CD8-positive, alpha-beta T cell (primary cell): ENCODE measurements at regions of chr16 and their contacts with region 1.

Region 1: DNA sequence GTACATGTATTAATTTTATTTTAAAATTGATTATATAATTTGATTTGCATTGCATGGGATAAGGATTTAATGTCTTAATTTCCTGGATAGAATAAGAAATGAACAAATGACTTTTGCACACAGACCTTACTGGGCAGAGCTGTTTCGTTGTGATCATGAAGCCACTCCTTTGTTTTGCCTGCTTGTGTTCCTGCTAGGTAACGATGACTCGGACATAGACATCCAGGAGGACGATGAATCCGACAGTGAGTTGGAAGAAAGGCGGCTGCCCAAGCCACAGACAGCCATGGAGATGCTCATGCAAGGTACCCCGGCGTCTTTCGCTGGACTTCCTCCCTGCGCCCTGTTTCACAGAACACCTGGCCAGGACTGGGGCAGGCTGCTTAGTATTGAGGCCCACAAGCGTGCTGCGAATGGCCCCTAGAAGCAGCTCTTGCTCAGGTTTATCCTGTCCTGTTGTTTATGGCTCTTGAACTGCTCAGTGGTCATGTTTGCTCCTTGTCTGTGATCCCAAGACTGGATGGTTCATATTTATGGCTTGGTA is 29.6 kb downstream of the CLUAP1 start:
- DNase-seq: no peak
- ATAC-seq: no peak
- H3K4me3 ChIP-seq: no peak overlapping the region
- H3K4me3 Mint-ChIP-seq: no peak overlapping the region
- H3K27ac ChIP-seq: no peak overlapping the region
- H3K27ac Mint-ChIP-seq: no peak overlapping the region
- H3K4me1 ChIP-seq: no peaks in the 10 kb centered on the region
- H3K4me1 Mint-ChIP-seq: peaks cover 13% of the 10 kb centered on the region
- H3K27me3 ChIP-seq: no peaks in the 10 kb centered on the region
- H3K27me3 Mint-ChIP-seq: no peaks in the 10 kb centered on the region
- CTCF ChIP-seq: no peak

Region 2: GRCh38 chr16:3564130-3564888 is 33.9 kb after region 1 on chr16:
- CTCF ChIA-PET with region 1: no interaction called
- POLR2A ChIA-PET with region 1: no interaction called
- intact Hi-C with region 1: no loop called
- DNase-seq: no peak
- ATAC-seq: no peak
- H3K4me3 ChIP-seq: no peak overlapping the region
- H3K4me3 Mint-ChIP-seq: no peak overlapping the region
- H3K27ac ChIP-seq: no peak overlapping the region
- H3K27ac Mint-ChIP-seq: no peak overlapping the region
- H3K4me1 ChIP-seq: no peaks in the 10 kb centered on the region
- H3K4me1 Mint-ChIP-seq: peaks cover 2% of the 10 kb centered on the region
- H3K27me3 ChIP-seq: no peaks in the 10 kb centered on the region
- H3K27me3 Mint-ChIP-seq: no peaks in the 10 kb centered on the region
- CTCF ChIP-seq: no peak

Region 3: DNA sequence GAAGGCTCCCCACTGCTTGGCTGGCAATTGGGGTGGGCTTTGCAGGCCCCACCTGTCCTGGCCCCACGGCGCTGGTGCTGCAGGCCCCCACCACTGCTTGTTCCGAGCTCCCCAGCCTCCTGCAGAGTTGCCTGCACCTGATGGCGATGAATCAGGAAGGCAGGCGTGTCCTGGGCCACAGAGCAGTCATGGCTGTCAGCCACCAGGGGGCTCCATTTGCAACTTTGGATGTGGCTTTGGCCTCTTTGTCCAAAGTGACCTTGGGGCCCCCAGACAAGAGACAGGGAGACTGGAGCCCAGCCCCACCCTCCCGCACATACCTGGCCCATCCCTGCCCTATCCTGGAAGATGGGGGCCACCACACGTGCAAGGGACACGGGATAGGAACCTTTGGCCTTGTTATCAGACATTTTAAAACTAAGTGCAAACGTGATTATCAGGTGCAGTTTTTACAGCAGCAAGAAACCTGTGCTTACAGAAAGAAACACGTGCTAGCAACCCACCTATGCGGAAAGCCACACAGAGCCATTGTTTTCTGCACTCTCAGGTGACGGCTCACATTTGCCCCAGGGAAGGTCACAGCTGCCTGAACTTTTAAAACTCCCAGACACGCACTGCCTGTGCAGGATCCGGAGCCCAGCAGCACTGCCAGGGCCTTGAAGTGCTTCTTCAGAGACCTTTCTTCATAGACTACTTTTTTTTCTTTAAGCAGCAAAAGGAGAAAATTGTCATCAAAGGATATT is 124.0 kb after region 1 on chr16 and contains the start of gene DNASE1:
- CTCF ChIA-PET with region 1: interaction called, 4 read pairs
- POLR2A ChIA-PET with region 1: no interaction called
- intact Hi-C with region 1: loop called in 1 of 2 experiments (anchors 5 kb)
- DNase-seq: peak; percentile 13 to 73 (median 57)
- ATAC-seq: peak; percentile 81
- H3K4me3 ChIP-seq: no peak within 1 kb of the TSS
- H3K4me3 Mint-ChIP-seq: no peak within 1 kb of the TSS
- H3K27ac ChIP-seq: no peak within 1 kb of the TSS
- H3K27ac Mint-ChIP-seq: peak within 1 kb of the TSS; percentile 32
- H3K4me1 ChIP-seq: no peaks in the 10 kb centered on the region
- H3K4me1 Mint-ChIP-seq: peaks cover 2% of the 10 kb centered on the region
- H3K27me3 ChIP-seq: no peaks in the 10 kb centered on the region
- H3K27me3 Mint-ChIP-seq: no peaks in the 10 kb centered on the region
- CTCF ChIP-seq: peak; percentile 69
- total RNA-seq, gene DNASE1: 7.6 to 7.9 TPM

Region 4: DNA sequence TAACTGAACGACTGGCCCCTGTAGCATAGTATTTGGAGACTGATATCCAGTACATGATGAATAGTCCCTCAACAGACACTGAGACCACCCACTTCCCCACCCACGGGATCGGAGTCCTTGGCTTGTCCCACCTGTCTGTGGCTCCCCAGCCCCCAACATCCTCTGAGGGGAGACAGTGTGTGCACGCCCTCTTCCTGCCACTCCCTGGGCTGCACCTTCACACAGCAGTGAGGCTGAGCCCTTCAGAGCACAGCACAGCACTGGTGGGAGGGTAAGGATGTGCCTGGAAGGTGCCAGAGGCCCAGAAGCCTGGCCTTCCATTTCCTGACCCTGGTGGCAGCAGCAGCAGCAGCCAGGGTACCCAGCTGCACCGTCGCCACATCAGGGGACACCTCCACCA is 135.1 kb after region 1 on chr16:
- CTCF ChIA-PET with region 1: interaction called, 13 read pairs
- POLR2A ChIA-PET with region 1: no interaction called
- intact Hi-C with region 1: loop called in 1 of 2 experiments (anchors 1 kb)
- DNase-seq: peak in 8 of 9 experiments; percentile 28 to 74 (median 54)
- ATAC-seq: peak; percentile 99
- H3K4me3 ChIP-seq: no peak overlapping the region
- H3K4me3 Mint-ChIP-seq: no peak overlapping the region
- H3K27ac ChIP-seq: peak overlapping the region; percentile 17 to 28
- H3K27ac Mint-ChIP-seq: peak overlapping the region; percentile 63
- H3K4me1 ChIP-seq: peaks cover 16% of the 10 kb centered on the region
- H3K4me1 Mint-ChIP-seq: peaks cover 15% of the 10 kb centered on the region
- H3K27me3 ChIP-seq: no peaks in the 10 kb centered on the region
- H3K27me3 Mint-ChIP-seq: no peaks in the 10 kb centered on the region
- CTCF ChIP-seq: peak; percentile 47